Stomach (tissue), 19 donors: ENCODE measurements at regions of chr6 and their contacts with region 1.

Region 1: DNA sequence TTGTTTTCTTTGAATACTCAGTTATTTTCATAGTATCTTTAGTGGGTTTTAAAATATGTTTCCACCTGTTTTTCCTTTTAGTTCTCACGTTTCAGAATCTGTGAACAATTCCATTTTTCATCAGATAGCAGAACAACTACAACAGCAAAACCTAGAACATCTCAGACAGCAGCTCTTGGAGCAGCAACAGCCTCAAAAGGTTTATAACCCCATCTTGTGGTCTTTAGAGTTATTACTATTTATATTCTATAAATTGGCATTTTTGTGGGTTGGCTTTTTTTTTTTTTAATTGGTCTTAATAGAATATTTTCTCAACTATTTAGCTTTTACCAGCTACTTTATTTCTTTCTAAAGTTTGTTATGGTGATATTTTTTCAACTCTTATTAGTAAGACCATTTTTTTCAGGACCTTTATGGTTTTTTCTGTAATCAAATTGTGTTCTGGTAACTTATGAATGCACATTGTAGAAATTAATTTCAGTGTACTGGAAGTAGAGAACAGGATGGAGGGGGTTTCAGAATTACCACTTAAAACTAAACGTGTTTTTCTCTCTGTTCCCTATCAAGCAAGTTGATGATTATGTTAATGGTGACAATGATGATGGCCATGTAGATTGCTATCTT is 72.2 kb downstream of the SCAF8 start:
- DNase-seq: peak in 1 of 2 donors; percentile 64
- H3K4me3 ChIP-seq: no peak overlapping the region
- H3K27ac ChIP-seq: no peak overlapping the region
- H3K4me1 ChIP-seq: peaks cover 0 to under 1% (median 0%) of the 10 kb centered on the region in 4 donors
- H3K27me3 ChIP-seq: no peaks in the 10 kb centered on the region
- CTCF ChIP-seq: peak in 2 of 7 experiments; percentile 35 to 40
- EP300 ChIP-seq: no peak
- POLR2A ChIP-seq: no peak

Region 2: GRCh38 chr6:154675602-154676088 is 129.8 kb before region 1 on chr6:
- intact Hi-C with region 1: loop called (anchors 5 kb)
- DNase-seq: peak; percentile 92 to 98
- H3K4me3 ChIP-seq: no peak overlapping the region
- H3K27ac ChIP-seq: no peak overlapping the region
- H3K4me1 ChIP-seq: no peaks in the 10 kb centered on the region
- H3K27me3 ChIP-seq: no peaks in the 10 kb centered on the region
- CTCF ChIP-seq: peak in 5 of 7 experiments; percentile 94 to 99 (median 96)
- EP300 ChIP-seq: no peak
- POLR2A ChIP-seq: no peak

Region 3: DNA sequence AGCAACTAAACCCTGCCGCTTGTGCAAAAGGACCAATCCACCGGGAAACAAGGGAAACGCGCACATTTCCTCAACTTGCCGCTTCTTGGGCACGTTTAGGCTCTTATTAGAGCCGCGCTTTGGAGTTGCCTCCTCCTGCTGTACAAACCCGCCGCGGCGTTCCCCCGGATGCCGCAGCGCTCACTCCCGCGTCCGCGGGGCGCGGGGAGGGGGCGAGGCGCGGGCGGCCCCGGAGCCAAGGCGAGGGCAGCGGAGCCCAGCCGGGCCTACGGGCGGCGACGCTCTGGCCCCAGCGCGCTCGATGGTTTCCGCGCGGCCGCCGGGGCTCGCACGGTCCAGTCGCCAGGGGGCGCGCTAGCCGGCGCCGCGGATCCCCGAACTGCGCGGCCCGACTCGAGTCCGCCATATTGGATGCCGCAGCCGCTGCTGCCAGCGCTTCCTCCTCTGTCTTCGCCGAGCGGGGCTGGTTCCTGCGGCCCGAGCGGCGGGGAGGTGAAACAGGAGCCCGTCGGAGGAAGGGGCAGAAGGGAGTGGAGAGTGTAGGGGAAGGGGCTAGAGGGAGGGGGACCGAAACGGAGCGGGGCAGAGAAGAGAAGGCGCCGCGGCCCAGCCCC is 72.3 kb before region 1 on chr6 and contains the start of gene SCAF8:
- intact Hi-C with region 1: loop called (anchors 10 kb)
- DNase-seq: peak; percentile 87 to 96
- H3K4me3 ChIP-seq: peak within 1 kb of the TSS; percentile 82 to 99 (median 94)
- H3K27ac ChIP-seq: peak within 1 kb of the TSS; percentile 99 to 100 (median 100)
- H3K4me1 ChIP-seq: peaks cover 28 to 51% (median 46%) of the 10 kb centered on the region in 4 donors
- H3K27me3 ChIP-seq: no peaks in the 10 kb centered on the region
- CTCF ChIP-seq: peak in 4 of 7 experiments; percentile 50 to 90 (median 80)
- EP300 ChIP-seq: no peak
- POLR2A ChIP-seq: no peak
- total RNA-seq, gene SCAF8: 15.1 to 62.5 (median 38.8) TPM